Caco-2 (cell line): ENCODE measurements at regions of chr18 and their contacts with region 1.

Region 1: DNA sequence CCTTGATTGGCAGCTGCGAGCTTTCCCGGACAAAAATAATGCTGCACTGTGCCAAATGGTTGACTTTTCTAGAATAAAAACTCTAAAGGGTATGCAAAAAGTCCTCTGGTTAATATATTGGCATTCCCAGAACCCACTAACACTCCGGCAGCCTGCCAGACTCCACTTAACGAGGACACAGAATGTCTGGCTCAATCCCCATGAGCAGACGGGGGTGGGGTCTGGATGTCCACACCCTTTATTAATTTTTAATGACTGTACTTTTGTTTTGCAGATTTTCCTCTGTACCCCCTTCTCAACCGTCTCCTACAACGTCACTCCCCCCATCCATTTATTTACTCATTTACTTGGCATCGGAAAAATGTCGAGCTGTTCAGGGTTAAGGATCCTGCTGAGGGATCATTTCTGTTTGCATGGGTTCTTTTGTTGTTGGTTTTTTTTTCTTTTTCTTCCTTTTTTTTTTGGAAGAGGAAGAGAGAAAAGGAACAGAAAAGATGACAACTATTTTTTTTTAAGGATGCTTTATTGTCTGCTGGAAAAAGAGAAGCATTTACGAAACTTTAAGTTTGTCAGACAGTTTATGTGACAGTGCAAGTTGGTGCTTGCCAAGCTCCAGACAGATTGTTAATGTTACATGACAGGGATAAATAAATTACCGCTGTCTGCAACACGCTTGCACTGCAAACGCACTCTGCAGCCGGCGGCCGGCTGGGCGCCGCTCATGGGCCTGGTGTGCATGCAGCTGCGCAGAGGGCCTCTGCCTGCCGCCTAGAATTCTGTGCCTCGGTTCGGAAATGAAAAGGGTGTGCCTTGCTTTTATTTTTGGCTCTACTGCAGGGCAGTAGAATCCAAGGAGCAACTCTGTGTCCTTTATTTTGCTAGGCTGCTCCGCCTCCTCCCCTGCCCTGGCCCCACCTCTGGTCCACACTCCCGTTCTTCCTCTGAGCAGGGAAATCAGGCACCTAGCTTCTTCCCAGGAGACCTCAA is 3.6 kb downstream of the LDLRAD4 start:
- DNase-seq: no peak
- H3K4me3 ChIP-seq: no peak overlapping the region
- H3K4me3 Mint-ChIP-seq: no peak overlapping the region
- H3K27ac Mint-ChIP-seq: no peak overlapping the region
- H3K4me1 ChIP-seq: peaks cover 7% of the 10 kb centered on the region
- H3K4me1 Mint-ChIP-seq: no peaks in the 10 kb centered on the region
- H3K27me3 ChIP-seq: peaks cover 5% of the 10 kb centered on the region
- H3K27me3 Mint-ChIP-seq: peaks cover 24% of the 10 kb centered on the region
- CTCF ChIP-seq: no peak

Region 2: GRCh38 chr18:13279181-13280069 is 57.3 kb after region 1 on chr18:
- CTCF ChIA-PET with region 1: no interaction called
- POLR2A ChIA-PET with region 1: no interaction called
- intact Hi-C with region 1: loop called (anchors 10 kb)
- DNase-seq: no peak
- H3K4me3 ChIP-seq: no peak overlapping the region
- H3K4me3 Mint-ChIP-seq: no peak overlapping the region
- H3K27ac Mint-ChIP-seq: no peak overlapping the region
- H3K4me1 ChIP-seq: no peaks in the 10 kb centered on the region
- H3K4me1 Mint-ChIP-seq: no peaks in the 10 kb centered on the region
- H3K27me3 ChIP-seq: no peaks in the 10 kb centered on the region; the same call in 1 of the 2 replicates
- H3K27me3 Mint-ChIP-seq: peaks cover 5% of the 10 kb centered on the region
- CTCF ChIP-seq: no peak